Caco-2 (cell line): ENCODE measurements at regions of chr4 and their contacts with region 1.

Region 1: GRCh38 chr4:76430519-76431388 is 4.3 kb upstream of the SHROOM3 start:
- DNase-seq: peak in 1 of 2 experiments; percentile 44
- H3K4me3 ChIP-seq: peak overlapping the region; percentile 17; the same call in 1 of the 2 replicates
- H3K4me3 Mint-ChIP-seq: peak overlapping the region; percentile 9
- H3K27ac Mint-ChIP-seq: no peak overlapping the region
- H3K4me1 ChIP-seq: no peaks in the 10 kb centered on the region
- H3K4me1 Mint-ChIP-seq: no peaks in the 10 kb centered on the region
- H3K27me3 ChIP-seq: no peaks in the 10 kb centered on the region
- H3K27me3 Mint-ChIP-seq: peaks cover 3% of the 10 kb centered on the region
- CTCF ChIP-seq: peak; percentile 45 to 61

Region 2: DNA sequence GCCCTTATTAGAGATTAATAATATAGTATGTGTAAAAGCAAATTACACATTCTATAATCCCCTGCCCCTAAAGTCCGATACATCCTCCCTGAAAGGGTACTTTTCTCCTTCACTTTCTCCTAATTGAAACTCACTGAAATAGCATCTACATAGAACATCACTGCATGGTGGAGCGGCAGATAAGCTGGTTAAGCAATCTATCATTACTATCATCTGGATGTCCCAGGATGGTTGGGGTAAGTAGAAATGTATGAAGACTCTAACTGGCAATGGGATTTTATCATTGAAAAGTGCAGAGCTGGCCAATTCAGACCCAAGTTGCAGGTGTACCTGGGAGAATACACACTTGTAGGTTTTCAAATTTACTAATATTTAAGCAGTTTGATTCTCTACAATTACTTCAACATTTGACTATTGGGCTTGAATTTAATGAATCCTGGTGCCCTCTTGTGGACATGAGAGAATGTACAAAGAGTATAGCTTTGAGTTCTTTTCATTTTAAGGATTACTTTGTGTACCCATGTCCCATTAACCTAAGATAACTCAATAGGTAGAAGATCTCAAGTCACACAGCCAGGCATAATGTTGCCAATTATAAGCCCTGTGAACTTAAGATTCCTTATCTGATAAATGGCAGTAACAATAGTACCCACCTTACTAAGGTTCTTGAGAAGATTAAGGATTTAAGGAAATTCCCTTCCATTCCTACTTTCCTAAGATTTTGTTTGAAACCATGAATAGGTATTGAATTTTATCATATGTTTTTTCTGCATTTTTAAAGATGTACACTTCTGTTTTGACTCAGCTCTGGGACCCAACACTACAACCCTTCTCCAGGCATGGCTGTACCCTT is 74.1 kb after region 1 on chr4:
- CTCF ChIA-PET with region 1: interaction called, 20 read pairs
- POLR2A ChIA-PET with region 1: no interaction called
- intact Hi-C with region 1: loop called (anchors 1 kb)
- DNase-seq: peak in 1 of 2 experiments; percentile 45
- H3K4me3 ChIP-seq: no peak overlapping the region
- H3K4me3 Mint-ChIP-seq: no peak overlapping the region
- H3K27ac Mint-ChIP-seq: no peak overlapping the region
- H3K4me1 ChIP-seq: no peaks in the 10 kb centered on the region
- H3K4me1 Mint-ChIP-seq: no peaks in the 10 kb centered on the region
- H3K27me3 ChIP-seq: no peaks in the 10 kb centered on the region
- H3K27me3 Mint-ChIP-seq: no peaks in the 10 kb centered on the region
- CTCF ChIP-seq: peak; percentile 54 to 72

Region 3: GRCh38 chr4:76748649-76749048 is 317.9 kb after region 1 on chr4:
- CTCF ChIA-PET with region 1: no interaction called
- POLR2A ChIA-PET with region 1: no interaction called
- intact Hi-C with region 1: loop called (anchors 5 kb)
- DNase-seq: peak in 1 of 2 experiments; percentile 37
- H3K4me3 ChIP-seq: no peak overlapping the region
- H3K4me3 Mint-ChIP-seq: no peak overlapping the region
- H3K27ac Mint-ChIP-seq: no peak overlapping the region
- H3K4me1 ChIP-seq: 0 out of 2 replicates have a peak, but pooled peaks cover 3% of the 10 kb centered on the region
- H3K4me1 Mint-ChIP-seq: peaks cover 14% of the 10 kb centered on the region
- H3K27me3 ChIP-seq: no peaks in the 10 kb centered on the region
- H3K27me3 Mint-ChIP-seq: no peaks in the 10 kb centered on the region
- CTCF ChIP-seq: peak in 1 of 2 experiments; percentile 27